MCF 10A (cell line): ENCODE measurements at regions of chr9 and their contacts with region 1.

Region 1: GRCh38 chr9:125558453-125559092 is 148.4 kb downstream of the MAPKAP1 start:
- DNase-seq: peak; percentile 77
- H3K4me3 Mint-ChIP-seq: no peak overlapping the region
- H3K27ac Mint-ChIP-seq: peak overlapping the region; percentile 35
- H3K4me1 Mint-ChIP-seq: no peaks in the 10 kb centered on the region
- H3K27me3 Mint-ChIP-seq: no peaks in the 10 kb centered on the region
- CTCF ChIP-seq: peak; percentile 88

Region 2: DNA sequence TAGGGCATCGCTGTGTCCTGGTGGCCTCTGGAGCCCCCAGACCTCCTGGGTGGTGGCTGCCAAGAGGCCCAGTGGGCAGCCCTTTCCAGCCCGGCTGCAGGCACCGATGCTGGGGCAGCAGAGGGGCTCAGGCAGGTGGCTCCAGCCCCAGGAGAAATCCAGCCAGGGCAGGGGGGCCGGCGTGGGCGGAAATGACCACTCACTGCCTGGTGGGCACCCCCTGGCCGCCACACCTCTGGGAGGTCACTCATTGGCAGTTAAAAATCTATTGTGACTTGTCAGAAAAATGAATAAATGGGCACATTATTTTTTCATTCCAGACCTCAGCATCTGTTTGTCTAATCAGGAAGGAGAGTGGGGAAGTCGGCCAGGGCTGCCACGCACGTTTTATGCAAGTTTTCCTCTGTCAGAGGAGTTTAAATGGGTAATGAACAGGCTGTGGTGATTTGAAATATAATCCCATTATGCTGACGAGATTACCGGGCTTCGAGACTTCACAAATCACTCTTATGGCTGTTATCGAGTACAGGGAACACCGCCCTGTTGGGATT is 125.0 kb before region 1 on chr9:
- CTCF ChIA-PET with region 1: no interaction called
- POLR2A ChIA-PET with region 1: no interaction called
- intact Hi-C with region 1: no loop called
- DNase-seq: no peak
- H3K4me3 Mint-ChIP-seq: no peak overlapping the region
- H3K27ac Mint-ChIP-seq: no peak overlapping the region
- H3K4me1 Mint-ChIP-seq: no peaks in the 10 kb centered on the region
- H3K27me3 Mint-ChIP-seq: no peaks in the 10 kb centered on the region
- CTCF ChIP-seq: no peak

Region 3: DNA sequence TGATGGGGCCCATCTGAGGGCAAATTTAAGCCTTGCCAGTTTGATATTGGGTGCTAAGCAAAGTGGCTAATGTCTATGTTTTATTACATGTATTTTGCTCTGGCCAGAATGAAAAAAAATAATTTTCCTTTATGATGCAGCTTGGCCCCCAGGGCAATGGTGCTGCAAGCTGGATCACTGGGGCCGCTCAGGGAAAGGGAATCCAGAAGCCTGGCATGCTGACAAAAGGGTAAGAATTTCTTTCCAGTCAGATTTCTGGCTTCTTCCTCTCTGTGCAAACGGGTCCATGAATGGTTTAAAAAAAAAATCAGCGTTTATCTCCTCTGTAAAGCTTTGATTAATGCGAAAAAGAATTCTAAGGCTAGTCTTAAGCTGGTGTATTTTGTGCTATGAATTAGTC is 10.0 kb after region 1 on chr9:
- CTCF ChIA-PET with region 1: interaction called, 23 read pairs
- POLR2A ChIA-PET with region 1: interaction called, 3 read pairs
- intact Hi-C with region 1: no loop called
- DNase-seq: no peak
- H3K4me3 Mint-ChIP-seq: no peak overlapping the region
- H3K27ac Mint-ChIP-seq: no peak overlapping the region
- H3K4me1 Mint-ChIP-seq: peaks cover 20% of the 10 kb centered on the region
- H3K27me3 Mint-ChIP-seq: no peaks in the 10 kb centered on the region
- CTCF ChIP-seq: no peak

Region 4: DNA sequence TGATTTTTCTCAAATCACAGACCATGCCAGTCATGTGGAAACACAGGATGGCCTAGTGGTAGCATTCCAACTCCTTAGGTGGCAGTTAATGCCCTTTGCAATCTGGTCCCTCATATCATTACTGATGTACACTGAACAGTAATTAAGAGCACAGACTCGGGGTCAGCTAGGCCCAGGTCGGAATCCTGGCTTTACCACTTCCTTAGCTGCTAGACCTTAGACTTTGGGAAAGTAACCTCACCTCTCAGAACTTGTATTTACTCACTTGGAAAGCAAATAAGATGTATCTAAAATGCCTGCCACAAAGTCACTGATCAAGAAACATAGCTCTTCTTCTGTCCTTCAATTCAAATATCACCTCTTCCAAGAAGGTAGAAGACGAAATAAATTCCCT is 35.7 kb after region 1 on chr9:
- CTCF ChIA-PET with region 1: interaction called, 11 read pairs
- POLR2A ChIA-PET with region 1: interaction called, 3 read pairs
- intact Hi-C with region 1: no loop called
- DNase-seq: no peak
- H3K4me3 Mint-ChIP-seq: no peak overlapping the region
- H3K27ac Mint-ChIP-seq: no peak overlapping the region
- H3K4me1 Mint-ChIP-seq: peaks cover 15% of the 10 kb centered on the region
- H3K27me3 Mint-ChIP-seq: no peaks in the 10 kb centered on the region
- CTCF ChIP-seq: no peak

Region 5: DNA sequence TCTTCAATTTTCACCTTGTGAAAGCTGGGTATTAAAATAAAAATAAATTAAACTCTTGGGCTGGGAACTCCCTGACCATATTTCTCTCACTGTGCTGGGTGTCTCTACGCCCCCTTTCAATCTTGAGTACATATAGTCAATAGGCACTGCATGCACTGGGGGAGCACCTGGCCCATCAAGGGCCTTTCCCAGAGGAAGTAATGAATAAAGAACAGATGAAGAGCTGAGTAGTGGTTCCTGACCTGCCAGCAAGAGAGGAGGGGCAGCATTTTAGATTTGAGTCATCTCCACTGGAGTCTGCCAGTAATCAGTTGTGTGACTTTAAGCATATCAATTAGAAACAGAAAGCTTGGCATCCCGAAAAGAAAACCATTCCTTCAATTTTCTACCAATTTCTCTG is 142.2 kb after region 1 on chr9:
- CTCF ChIA-PET with region 1: interaction called, 4 read pairs
- POLR2A ChIA-PET with region 1: no interaction called
- intact Hi-C with region 1: loop called (anchors 5 kb)
- DNase-seq: peak; percentile 7
- H3K4me3 Mint-ChIP-seq: no peak overlapping the region
- H3K27ac Mint-ChIP-seq: no peak overlapping the region
- H3K4me1 Mint-ChIP-seq: peaks cover 32% of the 10 kb centered on the region
- H3K27me3 Mint-ChIP-seq: no peaks in the 10 kb centered on the region
- CTCF ChIP-seq: no peak

Region 6: DNA sequence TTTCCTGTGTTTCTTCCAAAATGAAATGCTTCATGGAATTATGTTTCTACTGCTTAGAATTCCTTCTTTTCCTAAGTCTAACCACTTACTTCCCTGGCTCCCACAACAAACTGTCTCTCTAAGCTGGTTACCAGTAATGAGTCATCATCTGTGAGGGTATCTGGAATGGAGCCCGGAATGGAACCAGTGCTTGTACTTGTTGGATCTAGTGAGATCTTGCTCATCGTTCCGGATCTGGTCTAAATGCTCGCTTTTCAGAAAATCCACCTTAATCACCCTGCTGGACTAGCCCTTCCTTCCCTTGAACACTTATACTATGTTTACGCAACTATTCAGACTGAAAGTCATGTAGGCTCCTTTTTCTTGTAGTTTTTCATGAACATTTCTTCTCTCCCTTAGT is 373.4 kb after region 1 on chr9:
- CTCF ChIA-PET with region 1: no interaction called
- POLR2A ChIA-PET with region 1: no interaction called
- intact Hi-C with region 1: loop called (anchors 1 kb)
- DNase-seq: peak; percentile 99
- H3K4me3 Mint-ChIP-seq: peak overlapping the region; percentile 38
- H3K27ac Mint-ChIP-seq: peak overlapping the region; percentile 4
- H3K4me1 Mint-ChIP-seq: peaks cover 18% of the 10 kb centered on the region
- H3K27me3 Mint-ChIP-seq: no peaks in the 10 kb centered on the region
- CTCF ChIP-seq: no peak

Region 7: DNA sequence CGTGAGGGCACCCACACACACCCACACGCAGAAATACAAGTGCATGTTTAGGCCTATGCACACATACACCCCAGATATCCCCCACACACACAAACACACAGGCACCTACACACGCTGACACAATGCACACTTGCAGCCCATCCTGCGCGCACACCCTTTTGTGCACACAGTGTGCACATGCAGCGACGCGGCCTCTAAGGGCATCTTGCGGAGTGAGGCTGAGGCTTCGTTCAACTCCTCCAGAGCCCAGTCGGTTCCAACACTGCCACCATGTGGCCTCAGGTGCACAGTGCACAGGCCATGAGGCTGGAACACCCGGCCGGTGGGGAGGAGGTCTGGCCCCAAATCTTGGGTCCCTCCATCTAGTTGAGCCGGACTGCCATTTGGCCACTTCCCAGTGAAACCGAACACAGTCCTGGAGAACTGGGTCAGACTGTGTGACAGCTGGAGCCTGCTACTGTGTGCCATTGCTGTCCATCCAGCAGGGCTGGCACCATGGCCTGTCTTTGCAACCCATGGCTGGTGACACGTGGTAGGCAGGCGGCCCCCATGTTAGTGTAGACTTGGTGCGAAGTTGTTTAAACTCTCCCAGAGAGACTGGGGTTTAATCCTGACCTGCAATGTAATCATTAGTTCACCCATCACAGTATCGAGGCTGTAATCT is 670.3 kb after region 1 on chr9:
- CTCF ChIA-PET with region 1: interaction called, 7 read pairs
- POLR2A ChIA-PET with region 1: no interaction called
- intact Hi-C with region 1: loop called (anchors 1 kb)
- DNase-seq: peak; percentile 70
- H3K4me3 Mint-ChIP-seq: no peak overlapping the region
- H3K27ac Mint-ChIP-seq: no peak overlapping the region
- H3K4me1 Mint-ChIP-seq: no peaks in the 10 kb centered on the region
- H3K27me3 Mint-ChIP-seq: peaks cover 52% of the 10 kb centered on the region
- CTCF ChIP-seq: peak; percentile 98

Region 8: GRCh38 chr9:126490871-126491567 is 932.4 kb after region 1 on chr9:
- CTCF ChIA-PET with region 1: interaction called, 11 read pairs
- POLR2A ChIA-PET with region 1: no interaction called
- intact Hi-C with region 1: loop called (anchors 5 kb)
- DNase-seq: peak; percentile 66
- H3K4me3 Mint-ChIP-seq: no peak overlapping the region
- H3K27ac Mint-ChIP-seq: no peak overlapping the region
- H3K4me1 Mint-ChIP-seq: no peaks in the 10 kb centered on the region
- H3K27me3 Mint-ChIP-seq: no peaks in the 10 kb centered on the region
- CTCF ChIP-seq: peak; percentile 92